Mammary epithelial cell (primary cell): ENCODE measurements at regions of chr1 and their contacts with region 1.

Region 1: GRCh38 chr1:62457955-62458354 is 21.1 kb downstream of the USP1 start:
- DNase-seq: no peak
- H3K4me3 ChIP-seq: no peak overlapping the region
- H3K27ac ChIP-seq: no peak overlapping the region
- H3K4me1 ChIP-seq: no peaks in the 10 kb centered on the region
- H3K27me3 ChIP-seq: no peaks in the 10 kb centered on the region
- CTCF ChIP-seq: no peak

Region 2: GRCh38 chr1:62131093-62131725 is 326.7 kb before region 1 on chr1:
- CTCF ChIA-PET with region 1: no interaction called
- dilution Hi-C with region 1: no loop called
- in situ Hi-C with region 1: no loop called
- intact Hi-C with region 1: no loop called
- DNase-seq: peak; percentile 25
- H3K4me3 ChIP-seq: no peak overlapping the region
- H3K27ac ChIP-seq: no peak overlapping the region
- H3K4me1 ChIP-seq: no peaks in the 10 kb centered on the region
- H3K27me3 ChIP-seq: no peaks in the 10 kb centered on the region
- CTCF ChIP-seq: peak; percentile 93 to 97

Region 3: DNA sequence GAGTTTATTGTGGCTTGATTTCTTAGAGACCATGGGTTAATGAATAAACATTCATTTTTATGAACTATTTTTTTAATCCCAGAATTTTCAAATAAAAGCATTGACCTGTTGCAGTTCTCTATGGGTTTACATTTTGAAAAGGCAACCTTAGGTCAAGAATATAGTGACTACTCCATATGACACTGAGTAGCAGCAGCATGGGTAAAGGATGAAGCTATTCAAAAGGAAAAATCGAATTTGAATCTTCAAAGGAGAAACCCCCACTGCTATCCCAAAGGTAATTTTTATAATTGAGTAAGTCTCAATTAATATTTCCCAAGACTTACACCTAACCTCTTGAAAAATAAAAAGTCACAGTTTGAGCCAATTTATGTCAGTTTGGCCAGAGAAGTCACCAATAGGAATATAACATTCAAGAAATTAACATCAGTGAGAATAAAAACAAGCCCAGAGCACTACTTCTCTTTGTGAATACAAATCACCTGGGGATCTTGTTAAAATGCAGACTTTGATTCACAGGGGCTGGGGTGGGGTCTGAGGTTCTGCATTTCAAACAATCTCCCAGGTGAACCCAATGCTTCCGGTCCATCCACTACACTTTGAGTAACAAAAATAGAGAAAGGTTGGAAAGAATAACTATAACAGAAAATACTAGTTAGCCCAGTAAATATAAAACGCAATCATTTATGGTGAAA is 18.7 kb after region 1 on chr1:
- CTCF ChIA-PET with region 1: interaction called, 11 read pairs
- dilution Hi-C with region 1: no loop called
- in situ Hi-C with region 1: no loop called
- intact Hi-C with region 1: no loop called
- DNase-seq: no peak
- H3K4me3 ChIP-seq: no peak overlapping the region
- H3K27ac ChIP-seq: no peak overlapping the region
- H3K4me1 ChIP-seq: no peaks in the 10 kb centered on the region
- H3K27me3 ChIP-seq: no peaks in the 10 kb centered on the region
- CTCF ChIP-seq: no peak

Region 4: GRCh38 chr1:64030411-64030810 is 1572.5 kb after region 1 on chr1:
- CTCF ChIA-PET with region 1: no interaction called
- dilution Hi-C with region 1: no loop called
- in situ Hi-C with region 1: no loop called
- intact Hi-C with region 1: no loop called
- DNase-seq: no peak
- H3K4me3 ChIP-seq: no peak overlapping the region
- H3K27ac ChIP-seq: no peak overlapping the region
- H3K4me1 ChIP-seq: peaks cover 3% of the 10 kb centered on the region
- H3K27me3 ChIP-seq: no peaks in the 10 kb centered on the region
- CTCF ChIP-seq: no peak